BJ (cell line): ENCODE measurements at regions of chr9 and their contacts with region 1.

Region 1: DNA sequence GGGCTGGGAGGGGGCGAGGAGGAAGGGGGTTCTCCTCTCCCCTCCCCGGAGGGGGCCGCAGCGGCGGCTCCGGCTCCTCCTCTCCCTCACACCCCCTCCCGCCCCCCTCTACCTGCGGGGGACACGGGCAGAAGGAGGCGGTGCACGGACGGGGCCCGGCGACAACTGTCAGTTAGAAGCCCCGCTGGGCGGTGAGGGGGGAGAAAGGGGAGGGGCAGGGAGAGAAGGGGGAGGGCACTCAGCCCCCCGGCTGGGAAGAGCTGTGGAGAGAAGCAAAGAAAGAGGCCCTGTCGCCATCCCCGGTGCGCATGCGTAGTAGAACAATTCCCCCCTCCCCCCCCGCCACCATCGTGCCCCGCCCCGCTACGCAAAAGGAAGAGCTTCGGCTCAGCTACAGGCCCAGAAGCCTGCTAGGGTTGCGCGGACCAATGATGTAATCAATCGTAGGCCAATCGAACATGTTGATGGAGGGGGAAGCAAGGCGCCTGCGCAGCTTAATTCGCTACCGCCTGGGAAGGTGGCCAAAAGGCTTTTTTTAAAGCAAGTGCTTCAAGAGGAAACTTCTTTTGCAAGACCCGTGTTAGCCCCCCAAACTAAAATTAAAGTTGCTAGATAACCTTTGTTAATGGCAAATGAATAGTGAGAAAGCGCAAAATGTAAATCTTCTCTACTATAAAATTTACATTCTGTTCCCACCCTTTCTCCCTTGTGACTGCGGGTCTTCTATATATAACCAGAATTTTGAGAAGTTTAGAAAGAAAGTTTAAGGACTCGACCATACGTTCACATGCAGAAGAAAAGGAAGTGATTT is 7.0 kb downstream of the RANBP6 start:
- DNase-seq: peak; percentile 90
- H3K4me3 ChIP-seq: peak overlapping the region; percentile 83
- H3K27me3 ChIP-seq: no peaks in the 10 kb centered on the region
- CTCF ChIP-seq: no peak

Region 2: GRCh38 chr9:5910413-5911057 is 97.8 kb before region 1 on chr9:
- CTCF ChIA-PET with region 1: no interaction called
- POLR2A ChIA-PET with region 1: interaction called, 11 read pairs
- DNase-seq: no peak
- H3K4me3 ChIP-seq: no peak overlapping the region
- H3K27me3 ChIP-seq: no peaks in the 10 kb centered on the region
- CTCF ChIP-seq: no peak

Region 3: GRCh38 chr9:6055213-6055612 is 46.8 kb after region 1 on chr9:
- CTCF ChIA-PET with region 1: no interaction called
- POLR2A ChIA-PET with region 1: no interaction called
- DNase-seq: peak; percentile 56
- H3K4me3 ChIP-seq: no peak overlapping the region
- H3K27me3 ChIP-seq: peaks cover 3% of the 10 kb centered on the region; the same call in 1 of the 2 replicates
- CTCF ChIP-seq: peak; percentile 52